ENCODE measurements at regions of chr14 and their contacts with region 1.

Region 1: GRCh38 chr14:64232095-64232838 is 61.9 kb downstream of the ESR2 start:
- DNase-seq: peak; percentile 56
- H3K4me3 ChIP-seq: peak overlapping the region; percentile 78
- H3K27ac ChIP-seq: peak overlapping the region; percentile 98
- H3K4me1 ChIP-seq: peaks cover 56% of the 10 kb centered on the region
- CTCF ChIP-seq: no peak

Region 2: DNA sequence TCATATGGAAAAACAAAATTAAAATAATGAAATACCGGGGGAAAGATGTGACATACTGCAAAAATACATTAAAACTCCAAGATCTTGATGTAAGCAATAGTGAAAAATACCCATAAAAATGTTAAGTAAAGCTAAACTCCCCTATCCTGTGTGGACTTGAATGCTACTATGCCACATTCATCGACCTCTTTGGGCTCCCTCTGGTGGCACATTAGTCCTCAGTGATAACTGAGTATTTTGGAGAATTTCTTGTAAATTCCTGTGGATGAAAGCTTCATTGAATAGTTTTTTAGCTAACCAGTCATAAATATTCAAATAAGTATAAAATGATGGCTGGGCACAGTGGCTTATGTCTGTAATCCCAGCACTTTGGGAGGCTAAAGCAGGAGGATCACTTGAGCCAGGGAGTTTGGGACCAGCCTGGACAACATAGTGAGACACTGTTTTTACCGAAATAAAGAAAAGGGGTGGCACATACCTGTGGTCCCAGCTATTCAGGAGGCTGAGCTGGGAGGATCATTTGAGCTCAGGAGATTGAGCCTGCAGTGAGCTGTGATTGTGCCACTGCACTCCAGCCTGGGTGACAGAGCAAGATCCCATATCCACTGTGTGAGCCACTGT is 462.0 kb before region 1 on chr14:
- CTCF ChIA-PET with region 1: no interaction called
- POLR2A ChIA-PET with region 1: no interaction called
- intact Hi-C with region 1: no loop called
- DNase-seq: peak; percentile 77
- H3K4me3 ChIP-seq: no peak overlapping the region
- H3K27ac ChIP-seq: no peak overlapping the region
- H3K4me1 ChIP-seq: no peaks in the 10 kb centered on the region
- CTCF ChIP-seq: peak; percentile 94

Region 3: DNA sequence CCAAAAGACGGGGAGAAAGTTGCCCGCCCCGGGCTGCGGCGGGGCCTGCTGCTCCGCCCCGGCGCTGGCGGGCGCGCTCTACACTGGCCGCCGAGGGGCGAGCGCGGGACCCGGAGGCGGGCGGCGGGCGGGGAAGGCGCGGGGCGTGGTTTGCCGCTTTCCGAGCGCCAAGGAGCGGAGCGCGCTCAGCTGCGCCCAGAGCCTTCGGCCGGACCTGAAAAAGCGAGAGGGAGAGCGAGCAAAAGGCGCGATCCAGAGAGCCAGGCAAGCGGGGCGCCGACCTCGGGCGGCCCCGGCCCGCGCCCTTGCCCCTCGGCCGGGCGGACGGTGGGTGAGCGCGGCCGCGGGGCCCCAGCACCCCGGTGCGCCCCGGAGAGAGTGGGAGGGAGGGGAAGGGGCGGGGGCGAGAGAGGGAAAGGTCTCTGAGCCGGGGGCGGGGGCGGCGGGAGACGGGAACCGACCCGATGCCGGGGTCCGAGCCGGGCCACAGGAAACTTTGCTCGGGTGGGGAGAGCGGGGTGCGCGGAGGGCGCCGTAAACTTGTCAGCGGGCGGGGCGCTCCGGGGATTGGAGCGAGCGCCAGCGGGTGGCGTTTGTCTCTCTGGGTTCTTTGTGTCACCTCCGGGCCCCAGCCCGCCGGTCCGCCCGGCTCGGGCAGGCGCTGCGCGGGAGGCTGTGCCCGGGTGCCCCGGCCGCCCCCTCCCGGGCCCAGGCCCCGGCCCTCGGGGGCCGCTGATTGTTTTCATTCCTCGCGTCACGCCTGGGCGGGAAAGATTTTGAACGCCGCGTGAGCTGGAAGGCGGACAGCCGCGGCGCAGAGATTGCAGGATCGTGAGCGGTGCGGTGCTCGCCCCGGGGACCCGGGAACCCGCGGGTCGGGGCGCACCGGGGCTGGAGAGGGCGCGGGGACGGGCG is 379.2 kb before region 1 on chr14 and contains the start of gene SYNE2:
- CTCF ChIA-PET with region 1: no interaction called
- POLR2A ChIA-PET with region 1: no interaction called
- intact Hi-C with region 1: loop called (anchors 5 kb)
- DNase-seq: peak; percentile 91
- H3K4me3 ChIP-seq: peak within 1 kb of the TSS; percentile 92
- H3K27ac ChIP-seq: peak within 1 kb of the TSS; percentile 83
- H3K4me1 ChIP-seq: peaks cover 37% of the 10 kb centered on the region
- CTCF ChIP-seq: peak; percentile 56
- total RNA-seq, gene SYNE2: 131 and 150 TPM in 2 replicates

Region 4: GRCh38 chr14:64196814-64197411 is 35.4 kb before region 1 on chr14:
- CTCF ChIA-PET with region 1: no interaction called
- POLR2A ChIA-PET with region 1: interaction called, 11 read pairs
- intact Hi-C with region 1: no loop called
- DNase-seq: no peak
- H3K4me3 ChIP-seq: no peak overlapping the region
- H3K27ac ChIP-seq: no peak overlapping the region
- H3K4me1 ChIP-seq: peaks cover 21% of the 10 kb centered on the region
- CTCF ChIP-seq: no peak

Region 5: DNA sequence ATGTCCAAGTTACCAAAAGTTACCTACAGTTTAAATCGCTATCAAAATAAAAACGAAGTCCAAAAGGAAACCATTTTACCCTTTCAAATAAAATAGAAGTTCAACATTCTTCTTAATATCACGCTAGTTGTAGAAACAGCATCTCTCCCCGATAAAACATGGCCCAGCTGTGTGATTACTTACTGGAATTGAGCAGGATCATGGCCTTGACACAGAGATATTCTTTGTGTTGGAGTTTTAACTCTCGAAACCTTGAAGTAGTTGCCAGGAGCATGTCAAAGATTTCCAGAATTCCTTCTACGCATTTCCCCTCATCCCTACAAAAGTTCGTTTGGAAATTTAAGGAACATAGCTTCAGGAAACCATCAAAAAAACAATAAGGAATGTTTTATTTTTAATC is 17.1 kb after region 1 on chr14:
- CTCF ChIA-PET with region 1: no interaction called
- POLR2A ChIA-PET with region 1: interaction called, 16 read pairs
- intact Hi-C with region 1: no loop called
- DNase-seq: no peak
- H3K4me3 ChIP-seq: no peak overlapping the region
- H3K27ac ChIP-seq: no peak overlapping the region
- H3K4me1 ChIP-seq: peaks cover 8% of the 10 kb centered on the region
- CTCF ChIP-seq: no peak

Region 6: GRCh38 chr14:64338616-64339316 is 106.5 kb after region 1 on chr14:
- CTCF ChIA-PET with region 1: no interaction called
- POLR2A ChIA-PET with region 1: interaction called, 4 read pairs
- intact Hi-C with region 1: loop called (anchors 1 kb)
- DNase-seq: peak; percentile 98
- H3K4me3 ChIP-seq: peak overlapping the region; percentile 80
- H3K27ac ChIP-seq: peak overlapping the region; percentile 76
- H3K4me1 ChIP-seq: peaks cover 21% of the 10 kb centered on the region
- CTCF ChIP-seq: no peak

Region 7: DNA sequence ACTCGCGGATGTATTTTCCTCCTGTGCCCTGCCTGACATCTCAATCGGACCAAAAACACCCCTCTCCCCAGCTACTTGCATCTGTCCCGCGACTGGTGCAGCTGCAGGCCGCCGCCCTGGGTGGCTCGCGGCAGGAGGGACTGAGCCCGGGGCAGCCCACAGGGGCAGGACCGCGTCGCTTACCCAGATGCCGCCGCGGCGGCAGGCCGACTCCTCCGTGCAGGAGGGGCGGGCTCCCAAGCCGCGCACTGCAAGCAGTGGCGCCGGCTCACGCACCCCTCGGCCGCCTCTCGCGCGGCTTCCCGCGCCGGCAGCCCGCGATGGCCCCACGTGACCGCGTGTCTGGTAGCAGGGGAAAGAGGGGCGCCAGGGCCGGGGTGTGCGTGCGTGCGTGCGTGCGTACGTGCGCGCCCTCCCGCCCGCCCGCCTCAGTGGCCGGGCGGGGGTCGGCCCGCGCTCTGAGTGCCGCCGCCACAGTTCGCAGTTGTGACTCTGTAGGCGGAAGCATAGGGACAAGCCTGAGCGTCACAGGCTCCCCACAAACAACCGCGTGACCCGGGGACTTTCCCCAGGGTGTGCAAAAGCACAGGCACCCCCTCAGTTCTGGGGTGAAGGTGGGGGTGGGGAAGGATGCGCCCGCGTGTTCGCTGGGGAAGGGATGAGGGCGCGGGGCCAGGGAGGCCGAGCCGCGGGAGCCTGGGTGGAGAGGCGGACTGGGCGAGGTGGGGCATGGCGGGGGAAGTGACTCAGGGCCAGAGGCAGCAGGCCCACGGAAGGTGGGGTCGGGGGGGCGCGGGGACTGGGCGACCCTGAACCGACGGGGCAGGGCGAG is 271.4 kb after region 1 on chr14 and contains the start of gene ZBTB25:
- CTCF ChIA-PET with region 1: no interaction called
- POLR2A ChIA-PET with region 1: no interaction called
- intact Hi-C with region 1: loop called (anchors 2 kb)
- DNase-seq: peak; percentile 92
- H3K4me3 ChIP-seq: peak within 1 kb of the TSS; percentile 87
- H3K27ac ChIP-seq: peak within 1 kb of the TSS; percentile 96
- H3K4me1 ChIP-seq: peaks cover 55% of the 10 kb centered on the region
- CTCF ChIP-seq: no peak
- total RNA-seq, gene ZBTB25: 16.1 and 18.4 TPM in 2 replicates

Region 8: DNA sequence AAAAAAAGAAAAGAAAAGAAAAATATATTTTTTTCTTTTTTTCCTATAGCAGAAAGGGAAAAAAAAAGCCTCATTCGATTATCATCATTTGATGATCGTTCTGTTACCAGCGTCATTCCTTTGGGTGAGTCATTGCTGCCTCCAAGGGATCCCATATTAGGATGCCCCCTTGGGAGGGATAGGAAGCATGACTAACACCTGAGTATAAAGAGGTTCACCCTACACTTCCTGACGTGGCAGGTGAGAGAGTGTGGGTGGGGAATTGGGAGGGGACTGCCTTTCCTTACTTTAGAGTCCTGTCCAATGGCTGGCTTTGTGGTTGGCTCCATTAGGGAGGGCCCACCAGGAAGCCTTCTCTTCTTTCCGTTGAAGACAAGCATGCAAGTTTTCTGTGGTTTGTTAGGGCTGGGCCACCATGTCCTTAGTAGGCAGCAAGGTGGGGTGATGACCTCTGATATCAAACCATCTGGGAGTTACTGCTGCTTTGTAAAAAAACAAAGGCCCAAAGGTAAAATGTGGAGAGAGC is 1124.1 kb after region 1 on chr14:
- CTCF ChIA-PET with region 1: no interaction called
- POLR2A ChIA-PET with region 1: no interaction called
- intact Hi-C with region 1: loop called (anchors 5 kb)
- DNase-seq: peak; percentile 54
- H3K4me3 ChIP-seq: peak overlapping the region; percentile 38
- H3K27ac ChIP-seq: peak overlapping the region; percentile 97
- H3K4me1 ChIP-seq: peaks cover 98% of the 10 kb centered on the region
- CTCF ChIP-seq: no peak